ENCODE measurements at regions of chr1 and their contacts with region 1.

Region 1: GRCh38 chr1:165403835-165404482 is 41.0 kb downstream of the RXRG start:
- DNase-seq: no peak
- ATAC-seq: peak; percentile 59 to 61
- H3K4me3 ChIP-seq: no peak overlapping the region
- H3K27ac ChIP-seq: no peak overlapping the region
- H3K4me1 ChIP-seq: no peaks in the 10 kb centered on the region
- H3K27me3 ChIP-seq: no peaks in the 10 kb centered on the region

Region 2: GRCh38 chr1:165592945-165593823 is 189.2 kb after region 1 on chr1:
- intact Hi-C with region 1: loop called (anchors 2 to 5 kb)
- DNase-seq: peak; percentile 49 to 66 (median 64)
- ATAC-seq: peak; percentile 50 to 56
- H3K4me3 ChIP-seq: no peak overlapping the region
- H3K27ac ChIP-seq: no peak overlapping the region
- H3K4me1 ChIP-seq: no peaks in the 10 kb centered on the region
- H3K27me3 ChIP-seq: no peaks in the 10 kb centered on the region

Region 3: GRCh38 chr1:165851034-165851658 is 447.2 kb after region 1 on chr1:
- intact Hi-C with region 1: no loop called
- DNase-seq: no peak
- ATAC-seq: no peak
- H3K4me3 ChIP-seq: no peak overlapping the region
- H3K27ac ChIP-seq: no peak overlapping the region
- H3K4me1 ChIP-seq: peaks cover 7% of the 10 kb centered on the region
- H3K27me3 ChIP-seq: no peaks in the 10 kb centered on the region

Region 4: GRCh38 chr1:166368030-166368429 is 964.1 kb after region 1 on chr1:
- intact Hi-C with region 1: no loop called
- DNase-seq: no peak
- ATAC-seq: no peak
- H3K4me3 ChIP-seq: no peak overlapping the region
- H3K27ac ChIP-seq: no peak overlapping the region
- H3K4me1 ChIP-seq: no peaks in the 10 kb centered on the region
- H3K27me3 ChIP-seq: no peaks in the 10 kb centered on the region

Measured in right cardiac atrium (tissue), 5 donors.